WTC11 (cell line): ENCODE measurements at regions of chr20 and their contacts with region 1.

Region 1: DNA sequence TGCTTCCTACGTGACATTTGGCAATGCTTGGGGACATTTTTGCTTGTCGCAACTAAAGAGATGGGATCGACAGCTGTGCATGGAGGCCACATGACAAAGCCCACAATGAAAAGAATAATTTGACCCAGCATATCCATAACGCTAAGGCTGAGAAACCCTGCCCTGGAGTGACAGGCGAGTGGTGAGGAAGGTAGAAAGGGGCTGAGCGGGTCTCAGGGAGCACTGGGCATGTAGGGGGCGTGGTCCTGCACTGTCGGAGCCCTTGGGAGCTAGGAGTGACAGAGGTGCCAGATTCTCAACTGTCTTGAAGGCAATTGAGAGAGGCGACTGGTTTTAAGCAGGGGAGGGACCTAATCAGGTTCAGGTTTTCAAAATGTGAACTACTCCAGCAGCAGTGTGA is 13.6 kb downstream of the GGTLC1 start:
- DNase-seq: no peak
- ATAC-seq: no peak
- H3K4me3 Mint-ChIP-seq: no peak overlapping the region
- H3K27ac Mint-ChIP-seq: no peak overlapping the region
- H3K4me1 Mint-ChIP-seq: peaks cover 21% of the 10 kb centered on the region
- H3K27me3 Mint-ChIP-seq: no peaks in the 10 kb centered on the region
- CTCF ChIP-seq: no peak

Region 2: DNA sequence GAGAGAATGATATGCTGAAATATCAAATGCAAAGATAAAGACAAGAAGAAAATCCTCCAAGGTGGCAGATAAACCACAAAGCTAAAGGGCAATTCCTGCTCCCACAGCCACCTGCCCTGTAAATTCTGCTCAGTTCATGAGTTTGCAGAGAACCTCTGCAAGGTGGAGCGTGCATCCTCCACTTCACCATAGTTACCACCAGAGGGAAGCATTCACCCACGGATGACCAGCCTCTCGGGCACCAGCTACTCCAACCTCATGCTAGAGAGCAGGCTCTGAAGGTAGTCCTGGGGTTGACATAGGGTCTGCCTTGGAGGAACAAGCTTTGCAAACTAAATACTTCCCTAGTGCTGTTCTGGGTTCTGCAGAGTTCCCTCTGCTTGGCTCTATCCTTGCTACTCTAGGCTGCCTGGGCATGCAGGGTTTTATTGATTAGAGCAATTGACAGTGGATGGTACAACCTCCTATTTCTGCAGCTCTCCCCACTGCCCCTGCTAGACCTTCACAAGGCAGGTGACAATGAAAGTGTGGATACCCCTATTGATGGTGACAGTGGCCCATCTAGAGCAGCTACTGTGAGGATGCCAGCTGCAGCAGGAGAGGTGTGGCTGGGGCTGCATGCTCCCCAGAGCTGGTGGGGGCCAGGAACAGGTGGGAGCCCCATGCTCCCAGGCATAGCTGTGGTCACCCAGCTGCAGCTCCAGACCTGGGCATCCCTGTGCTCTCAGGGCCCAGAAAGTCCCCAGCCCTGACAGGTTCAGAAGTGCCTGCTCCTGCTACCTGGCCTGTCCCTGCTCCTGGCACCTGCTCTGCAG is 37.5 kb before region 1 on chr20:
- CTCF ChIA-PET with region 1: interaction called, 24 read pairs
- POLR2A ChIA-PET with region 1: no interaction called
- DNase-seq: peak; percentile 75
- ATAC-seq: peak; percentile 99
- H3K4me3 Mint-ChIP-seq: no peak overlapping the region
- H3K27ac Mint-ChIP-seq: no peak overlapping the region
- H3K4me1 Mint-ChIP-seq: no peaks in the 10 kb centered on the region
- H3K27me3 Mint-ChIP-seq: no peaks in the 10 kb centered on the region
- CTCF ChIP-seq: peak; percentile 71